ENCODE measurements at regions of chr9 and their contacts with region 1.

Region 1: GRCh38 chr9:110183208-110184145 is 24.5 kb downstream of the C9orf152 start:
- DNase-seq: peak; percentile 77
- ATAC-seq: peak; percentile 90
- H3K4me3 Mint-ChIP-seq: no peak overlapping the region
- H3K27ac Mint-ChIP-seq: no peak overlapping the region
- H3K4me1 Mint-ChIP-seq: peaks cover 2% of the 10 kb centered on the region
- H3K27me3 Mint-ChIP-seq: no peaks in the 10 kb centered on the region

Region 2: DNA sequence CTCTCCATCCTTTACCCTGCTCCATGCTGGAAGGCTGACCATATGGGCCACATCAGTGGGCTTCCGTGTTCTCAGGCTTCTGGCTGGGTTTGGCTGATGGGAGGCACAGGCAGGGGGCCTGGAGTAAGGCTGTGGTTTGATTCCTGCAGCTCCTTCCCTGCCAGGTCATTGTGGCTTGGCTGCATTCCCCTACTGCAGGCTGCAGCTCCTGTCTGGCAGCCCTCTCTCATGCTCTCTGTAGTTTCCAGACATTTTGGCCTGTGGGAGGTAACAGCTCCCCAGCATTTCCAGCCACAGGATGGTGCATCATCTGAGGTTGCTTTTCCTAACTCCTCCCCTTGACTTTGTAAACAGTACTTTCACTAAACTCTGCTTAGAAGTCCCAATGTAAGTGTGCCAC is 583.3 kb before region 1 on chr9:
- CTCF ChIA-PET with region 1: no interaction called
- POLR2A ChIA-PET with region 1: no interaction called
- intact Hi-C with region 1: no loop called
- DNase-seq: no peak
- ATAC-seq: no peak
- H3K4me3 Mint-ChIP-seq: no peak overlapping the region
- H3K27ac Mint-ChIP-seq: no peak overlapping the region
- H3K4me1 Mint-ChIP-seq: no peaks in the 10 kb centered on the region
- H3K27me3 Mint-ChIP-seq: peaks cover 2% of the 10 kb centered on the region

Region 3: GRCh38 chr9:110427497-110428104 is 244.1 kb after region 1 on chr9:
- CTCF ChIA-PET with region 1: interaction called, 3 read pairs
- POLR2A ChIA-PET with region 1: no interaction called
- intact Hi-C with region 1: loop called in 1 of 2 experiments (anchors 2 kb)
- DNase-seq: peak; percentile 71
- ATAC-seq: no peak
- H3K4me3 Mint-ChIP-seq: no peak overlapping the region
- H3K27ac Mint-ChIP-seq: no peak overlapping the region
- H3K4me1 Mint-ChIP-seq: no peaks in the 10 kb centered on the region
- H3K27me3 Mint-ChIP-seq: no peaks in the 10 kb centered on the region

Measured in activated CD4-positive, alpha-beta T cell treated with anti-CD3 and anti-CD28 coated beads for 36 hours (primary cell).